ENCODE measurements at regions of chr16 and their contacts with region 1.

Region 1: DNA sequence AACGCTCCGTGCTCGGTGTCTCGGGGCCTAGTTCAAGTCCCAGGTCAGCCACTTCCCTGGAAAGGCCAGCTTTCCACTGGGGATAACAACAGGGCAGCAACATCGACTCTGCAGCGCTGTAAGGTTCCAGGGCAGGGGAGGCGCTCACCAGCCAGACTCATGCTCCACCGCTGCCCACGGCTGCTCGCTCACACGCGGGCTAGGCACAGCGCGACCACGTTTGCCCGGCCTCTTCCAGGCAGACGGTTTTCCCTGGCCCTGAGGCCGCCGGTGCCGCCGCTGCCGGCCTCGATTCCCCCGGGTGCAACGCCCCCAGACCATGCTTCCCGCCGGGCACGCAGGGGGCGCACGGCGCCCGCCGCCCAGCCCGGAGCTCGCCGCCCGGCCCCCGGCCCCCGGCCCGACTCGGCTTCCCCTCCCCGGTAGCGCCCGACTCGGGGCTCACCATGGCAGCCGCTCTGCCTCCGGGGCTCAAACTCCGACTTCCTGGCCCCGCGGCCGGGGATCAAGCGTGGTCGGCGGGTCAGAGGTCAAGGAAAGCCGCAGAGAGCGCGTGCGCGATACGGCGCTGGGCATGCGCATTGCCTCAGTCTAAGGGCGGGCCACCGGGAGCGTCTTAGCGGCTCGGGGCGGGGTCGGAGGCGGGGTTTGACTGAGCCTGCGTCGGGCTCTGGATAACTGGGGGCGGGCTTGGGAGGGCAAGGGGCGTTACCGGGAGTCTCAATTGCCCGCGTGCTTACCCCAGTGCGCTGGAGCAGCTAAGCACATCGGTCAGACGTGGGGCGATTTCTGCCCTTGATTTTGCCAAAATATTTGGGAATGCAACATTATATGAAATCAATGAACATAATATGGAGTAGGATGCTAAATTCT is at the start of gene PAM16:
- DNase-seq: peak; percentile 95 to 99 (median 97)
- H3K4me3 ChIP-seq: peak within 1 kb of the TSS; percentile 73 to 92
- H3K4me3 Mint-ChIP-seq: peak within 1 kb of the TSS; percentile 91 to 97 (median 94)
- H3K27ac ChIP-seq: peak within 1 kb of the TSS; percentile 79
- H3K27ac Mint-ChIP-seq: peak within 1 kb of the TSS; percentile 92 to 97 (median 94)
- H3K4me1 ChIP-seq: peaks cover 27% of the 10 kb centered on the region
- H3K4me1 Mint-ChIP-seq: peaks cover 16 to 43% (median 24%) of the 10 kb centered on the region in 4 donors
- H3K27me3 ChIP-seq: no peaks in the 10 kb centered on the region
- H3K27me3 Mint-ChIP-seq: no peaks in the 10 kb centered on the region
- total RNA-seq, gene PAM16: 38.6 to 54.8 TPM

Region 2: DNA sequence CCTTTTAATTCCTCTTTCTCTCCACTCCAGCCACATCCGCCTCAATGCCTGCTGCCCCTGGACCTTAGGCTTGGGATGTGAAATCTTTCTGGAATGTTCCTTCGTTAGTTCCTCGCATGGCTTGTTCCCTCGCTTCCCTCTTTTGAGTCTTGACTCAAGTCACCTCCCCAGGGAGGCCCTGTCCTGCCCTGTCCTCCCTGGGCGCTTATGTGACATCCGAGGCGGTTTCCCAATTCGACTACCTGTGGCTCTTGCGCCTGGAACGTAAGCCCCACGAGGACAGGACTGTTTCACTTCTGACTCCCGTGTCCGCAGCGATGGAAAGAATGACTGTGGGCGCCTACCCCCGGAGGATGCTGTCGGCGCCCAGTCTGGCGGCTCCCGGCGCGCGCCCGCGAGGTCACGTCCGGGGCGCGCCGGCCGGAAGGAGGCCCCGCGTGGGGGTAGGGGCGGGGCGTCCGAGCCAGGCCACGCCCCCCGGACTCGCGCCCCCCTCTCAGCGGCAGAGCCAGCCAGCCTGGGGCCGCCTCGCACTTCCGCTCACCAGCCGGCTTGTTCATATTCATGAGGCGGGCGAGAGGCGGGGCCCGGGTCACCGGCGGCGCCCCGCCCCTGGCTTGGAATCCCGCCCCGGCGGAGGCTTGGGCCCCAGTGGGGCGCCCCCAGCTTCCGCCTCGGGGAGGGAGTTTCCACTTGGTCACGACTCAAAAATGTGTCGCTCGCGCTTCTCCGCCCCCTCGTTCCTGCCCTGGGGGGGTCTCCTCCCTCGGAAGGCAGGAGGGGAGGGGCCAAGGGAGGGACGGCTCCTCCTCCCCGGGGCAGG is 43.6 kb before region 1 on chr16:
- CTCF ChIA-PET with region 1: interaction called, 3 read pairs
- POLR2A ChIA-PET with region 1: interaction called, 3 read pairs
- intact Hi-C with region 1: loop called (anchors 1 kb)
- DNase-seq: peak; percentile 97 to 99 (median 98)
- H3K4me3 ChIP-seq: peak overlapping the region; percentile 47 to 85
- H3K4me3 Mint-ChIP-seq: peak overlapping the region; percentile 87 to 97 (median 92)
- H3K27ac ChIP-seq: peak overlapping the region; percentile 76
- H3K27ac Mint-ChIP-seq: peak overlapping the region; percentile 96 to 100 (median 99)
- H3K4me1 ChIP-seq: peaks cover 18% of the 10 kb centered on the region
- H3K4me1 Mint-ChIP-seq: peaks cover 17 to 33% (median 20%) of the 10 kb centered on the region in 4 donors
- H3K27me3 ChIP-seq: no peaks in the 10 kb centered on the region
- H3K27me3 Mint-ChIP-seq: no peaks in the 10 kb centered on the region

Region 3: DNA sequence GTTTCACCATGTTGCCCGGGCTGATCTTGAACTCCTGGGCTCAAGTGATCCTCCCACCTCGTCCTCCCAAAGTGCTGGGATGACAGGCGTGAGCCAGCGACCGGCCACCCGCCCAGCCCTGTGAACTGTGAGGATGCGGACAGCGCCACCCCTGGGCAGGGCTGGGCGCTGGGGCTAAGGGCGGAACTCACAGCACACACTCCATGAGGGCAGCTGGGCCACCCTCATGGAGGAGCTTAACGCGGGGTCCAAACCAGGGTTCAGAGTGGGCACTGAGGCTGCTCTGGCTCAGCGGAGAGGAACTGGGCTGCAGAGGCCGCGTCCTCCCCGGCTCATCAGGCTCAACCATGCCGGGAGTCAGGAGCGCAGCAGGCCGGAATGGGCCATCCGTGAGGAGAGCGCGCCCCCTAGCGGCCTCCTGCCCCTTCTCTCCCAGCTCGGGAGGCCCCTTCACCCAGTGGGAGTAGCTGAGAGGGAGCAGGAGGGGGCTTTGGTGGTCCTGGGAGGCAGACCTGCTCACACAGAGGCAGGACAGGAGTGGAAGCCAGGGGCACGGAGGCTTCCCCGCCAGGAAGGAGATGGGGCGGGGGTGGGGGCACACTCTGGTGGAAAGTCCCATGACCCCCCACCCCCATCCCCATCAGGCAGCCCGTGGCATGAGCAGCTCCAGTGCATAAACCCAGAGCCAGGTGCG is 51.6 kb after region 1 on chr16:
- CTCF ChIA-PET with region 1: interaction called, 10 read pairs
- POLR2A ChIA-PET with region 1: interaction called, 3 read pairs
- intact Hi-C with region 1: no loop called
- DNase-seq: peak; percentile 51 to 63 (median 60)
- H3K4me3 ChIP-seq: no peak overlapping the region
- H3K4me3 Mint-ChIP-seq: peak overlapping the region in 1 of 8 donors; percentile 36
- H3K27ac ChIP-seq: no peak overlapping the region
- H3K27ac Mint-ChIP-seq: peak overlapping the region in 3 of 7 donors; percentile 41 to 87 (median 56)
- H3K4me1 ChIP-seq: no peaks in the 10 kb centered on the region
- H3K4me1 Mint-ChIP-seq: peaks cover 19 to 36% (median 24%) of the 10 kb centered on the region in 4 donors
- H3K27me3 ChIP-seq: no peaks in the 10 kb centered on the region
- H3K27me3 Mint-ChIP-seq: no peaks in the 10 kb centered on the region

Region 4: GRCh38 chr16:4425378-4426020 is 74.5 kb after region 1 on chr16 and contains the start of gene DNAJA3:
- CTCF ChIA-PET with region 1: no interaction called
- POLR2A ChIA-PET with region 1: no interaction called
- intact Hi-C with region 1: loop called (anchors 1 kb)
- DNase-seq: peak; percentile 93 to 96 (median 95)
- H3K4me3 ChIP-seq: peak within 1 kb of the TSS; percentile 98 to 99
- H3K4me3 Mint-ChIP-seq: peak within 1 kb of the TSS; percentile 92 to 98 (median 98)
- H3K27ac ChIP-seq: peak within 1 kb of the TSS; percentile 98
- H3K27ac Mint-ChIP-seq: peak within 1 kb of the TSS; percentile 98 to 100 (median 100)
- H3K4me1 ChIP-seq: peaks cover 28% of the 10 kb centered on the region
- H3K4me1 Mint-ChIP-seq: peaks cover 16 to 36% (median 24%) of the 10 kb centered on the region in 4 donors
- H3K27me3 ChIP-seq: no peaks in the 10 kb centered on the region
- H3K27me3 Mint-ChIP-seq: no peaks in the 10 kb centered on the region
- total RNA-seq, gene DNAJA3: 67.5 to 71.1 TPM

Region 5: GRCh38 chr16:4957720-4958509 is 606.9 kb after region 1 on chr16 and contains the start of gene SEC14L5:
- CTCF ChIA-PET with region 1: no interaction called
- POLR2A ChIA-PET with region 1: no interaction called
- intact Hi-C with region 1: loop called (anchors 5 kb)
- DNase-seq: peak; percentile 86 to 96 (median 89)
- H3K4me3 ChIP-seq: peak within 1 kb of the TSS; percentile 23 to 45
- H3K4me3 Mint-ChIP-seq: peak within 1 kb of the TSS; percentile 78 to 92 (median 86)
- H3K27ac ChIP-seq: no peak within 1 kb of the TSS
- H3K27ac Mint-ChIP-seq: peak within 1 kb of the TSS; percentile 1 to 77 (median 57)
- H3K4me1 ChIP-seq: peaks cover 16% of the 10 kb centered on the region
- H3K4me1 Mint-ChIP-seq: peaks cover 12 to 28% (median 20%) of the 10 kb centered on the region in 4 donors
- H3K27me3 ChIP-seq: peaks cover 11% of the 10 kb centered on the region
- H3K27me3 Mint-ChIP-seq: peaks cover 21 to 30% of the 10 kb centered on the region in 2 donors
- total RNA-seq, gene SEC14L5: not detected